Activated CD8-positive, alpha-beta T cell treated with anti-CD3 and anti-CD28 coated beads for 36 hours (primary cell): ENCODE measurements at regions of chr19 and their contacts with region 1.

Region 1: DNA sequence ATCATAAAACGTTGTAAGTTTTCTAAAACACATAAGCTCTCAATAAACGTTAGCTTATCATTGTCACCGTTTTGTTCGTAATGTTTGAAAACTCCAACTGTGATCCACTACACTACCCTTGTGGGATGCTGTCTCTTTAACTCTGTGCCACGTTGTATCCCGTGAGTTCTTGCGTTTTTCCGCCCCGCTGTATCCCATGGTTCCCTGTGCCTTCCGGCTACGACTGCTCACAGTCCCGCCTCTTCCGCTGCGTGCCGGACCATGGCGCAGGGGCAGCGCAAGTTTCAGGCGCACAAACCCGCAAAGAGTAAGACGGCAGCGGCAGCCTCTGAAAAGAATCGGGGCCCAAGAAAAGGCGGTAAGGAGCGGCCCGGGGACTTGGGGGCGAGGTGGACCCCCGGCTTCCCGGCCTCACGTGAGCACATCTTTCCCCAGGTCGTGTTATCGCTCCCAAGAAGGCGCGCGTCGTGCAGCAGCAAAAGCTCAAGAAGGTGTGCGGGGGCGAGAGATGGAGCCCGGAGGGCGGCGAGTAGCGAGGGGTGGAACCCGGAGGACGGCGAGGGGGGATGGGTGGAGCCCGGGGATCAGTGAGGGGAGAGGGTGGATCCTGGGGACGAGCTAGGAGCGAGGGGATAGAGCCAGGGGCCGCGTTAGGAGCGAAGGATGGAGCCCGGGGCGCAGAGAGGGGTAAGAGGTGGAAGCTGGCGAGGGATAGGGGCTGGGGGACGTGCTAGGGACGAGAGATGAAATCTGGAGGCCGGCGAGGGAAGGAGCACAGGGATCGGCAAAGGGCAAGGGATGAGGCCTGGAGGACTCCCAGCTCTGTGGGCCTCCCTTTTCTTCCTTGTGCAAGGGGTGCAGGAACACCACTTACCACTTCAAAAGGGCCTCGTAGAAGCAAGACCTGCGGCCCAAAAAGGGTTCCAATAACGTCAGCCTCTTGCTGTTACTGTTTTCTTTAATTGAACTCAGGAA is at the start of gene C19orf53:
- DNase-seq: peak; percentile 94
- ATAC-seq: peak; percentile 100
- H3K4me3 Mint-ChIP-seq: peak within 1 kb of the TSS; percentile 98
- H3K27ac Mint-ChIP-seq: peak within 1 kb of the TSS; percentile 97
- H3K4me1 Mint-ChIP-seq: peaks cover 17% of the 10 kb centered on the region
- H3K27me3 Mint-ChIP-seq: no peaks in the 10 kb centered on the region
- CTCF ChIP-seq: no peak
- total RNA-seq, gene C19orf53: 120 to 128 TPM

Region 2: DNA sequence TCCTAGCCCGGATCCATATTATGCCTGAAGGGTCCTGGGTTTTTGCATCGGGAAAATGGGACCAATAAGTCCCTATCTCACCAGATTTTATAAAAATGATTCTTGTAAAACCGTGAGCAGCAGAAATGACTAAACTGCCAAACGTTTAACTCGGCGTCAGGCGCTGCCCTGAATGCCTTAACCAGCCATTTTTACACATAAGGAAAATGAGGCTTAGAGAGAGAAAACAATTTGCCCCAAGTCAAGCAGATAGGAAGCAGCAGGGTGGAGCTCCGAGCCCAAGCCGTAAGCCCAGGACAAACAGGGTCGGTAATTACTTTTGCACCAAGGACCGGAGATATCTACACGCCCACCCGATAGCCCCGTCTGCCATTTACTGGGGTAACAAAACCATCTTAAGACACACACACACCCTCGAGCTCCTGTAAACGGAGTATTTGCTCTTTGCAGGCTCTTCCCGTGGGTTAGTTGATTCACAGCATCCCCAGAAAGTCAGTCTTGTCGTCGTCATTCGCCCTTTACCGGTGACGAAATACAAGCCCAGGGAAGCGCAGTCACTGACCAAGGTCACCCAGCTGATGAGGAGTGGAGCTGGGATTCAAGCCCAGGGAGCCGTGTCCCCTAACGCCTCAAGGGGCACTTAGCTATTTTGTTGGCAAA is 26.2 kb before region 1 on chr19:
- CTCF ChIA-PET with region 1: interaction called, 5 read pairs
- POLR2A ChIA-PET with region 1: interaction called, 14 read pairs
- intact Hi-C with region 1: no loop called
- DNase-seq: peak; percentile 42
- ATAC-seq: no peak
- H3K4me3 Mint-ChIP-seq: peak overlapping the region; percentile 93
- H3K27ac Mint-ChIP-seq: peak overlapping the region; percentile 90
- H3K4me1 Mint-ChIP-seq: peaks cover 22% of the 10 kb centered on the region
- H3K27me3 Mint-ChIP-seq: no peaks in the 10 kb centered on the region
- CTCF ChIP-seq: no peak

Region 3: GRCh38 chr19:13764101-13764807 is 10.2 kb before region 1 on chr19 and contains the start of gene MRI1:
- CTCF ChIA-PET with region 1: interaction called, 4 read pairs
- POLR2A ChIA-PET with region 1: interaction called, 18 read pairs
- intact Hi-C with region 1: no loop called
- DNase-seq: peak; percentile 78
- ATAC-seq: peak; percentile 87
- H3K4me3 Mint-ChIP-seq: peak within 1 kb of the TSS; percentile 84
- H3K27ac Mint-ChIP-seq: peak within 1 kb of the TSS; percentile 75
- H3K4me1 Mint-ChIP-seq: peaks cover 11% of the 10 kb centered on the region
- H3K27me3 Mint-ChIP-seq: no peaks in the 10 kb centered on the region
- CTCF ChIP-seq: no peak
- total RNA-seq, gene MRI1: 37.1 to 40.8 TPM

Region 4: GRCh38 chr19:13784731-13785452 is 10.4 kb after region 1 on chr19:
- CTCF ChIA-PET with region 1: interaction called, 5 read pairs
- POLR2A ChIA-PET with region 1: interaction called, 14 read pairs
- intact Hi-C with region 1: no loop called
- DNase-seq: peak; percentile 85
- ATAC-seq: peak; percentile 78
- H3K4me3 Mint-ChIP-seq: peak overlapping the region; percentile 14
- H3K27ac Mint-ChIP-seq: peak overlapping the region; percentile 41
- H3K4me1 Mint-ChIP-seq: peaks cover 32% of the 10 kb centered on the region
- H3K27me3 Mint-ChIP-seq: no peaks in the 10 kb centered on the region
- CTCF ChIP-seq: peak; percentile 77

Region 5: DNA sequence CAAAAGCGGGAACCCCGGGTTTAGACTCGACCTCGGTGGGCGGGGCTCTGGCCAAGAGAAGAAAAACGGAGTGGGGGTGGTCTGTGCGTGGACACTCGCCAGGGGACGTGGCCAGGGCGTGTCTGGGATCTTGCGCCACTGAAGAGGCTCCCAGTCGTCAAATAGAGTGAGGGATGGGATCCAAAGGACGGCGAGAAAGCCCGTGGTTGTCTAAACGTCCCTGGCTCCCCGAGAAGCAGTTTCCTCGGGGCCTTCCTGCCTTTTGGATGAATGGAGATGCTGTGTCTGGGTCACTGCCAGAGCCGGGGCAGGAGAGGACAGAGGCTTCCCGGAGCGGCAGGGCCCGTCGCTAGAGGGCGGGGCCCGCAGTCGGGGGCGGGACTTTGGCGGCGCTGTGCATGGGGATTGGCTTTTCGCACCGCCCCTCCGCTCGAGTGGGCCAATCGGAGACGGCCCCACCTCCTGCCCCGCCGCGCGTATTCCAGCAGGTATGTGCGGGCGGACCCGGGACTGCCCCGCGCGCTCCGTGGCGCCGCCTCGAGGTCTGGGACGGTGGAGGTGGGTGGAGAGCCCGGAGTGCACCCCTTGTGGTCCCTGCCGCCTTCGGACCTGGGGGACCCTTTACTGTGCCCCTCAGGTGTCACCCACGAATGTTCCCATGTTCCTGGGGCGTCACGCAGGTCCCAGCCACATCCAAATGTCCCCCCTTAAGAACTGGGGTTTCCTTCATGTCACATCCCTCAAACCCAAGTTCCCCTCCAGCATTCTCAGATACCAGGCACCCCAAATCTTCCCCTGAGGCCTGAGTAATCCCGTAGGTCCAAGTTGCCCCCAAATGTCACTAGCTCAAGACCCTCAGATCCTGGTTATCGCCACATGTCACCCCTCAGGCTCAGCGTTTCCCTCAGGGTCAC is 59.1 kb after region 1 on chr19:
- CTCF ChIA-PET with region 1: no interaction called
- POLR2A ChIA-PET with region 1: interaction called, 13 read pairs
- intact Hi-C with region 1: no loop called
- DNase-seq: peak; percentile 96
- ATAC-seq: peak; percentile 85
- H3K4me3 Mint-ChIP-seq: peak overlapping the region; percentile 68
- H3K27ac Mint-ChIP-seq: peak overlapping the region; percentile 87
- H3K4me1 Mint-ChIP-seq: peaks cover 39% of the 10 kb centered on the region
- H3K27me3 Mint-ChIP-seq: no peaks in the 10 kb centered on the region
- CTCF ChIP-seq: peak; percentile 65